ENCODE measurements at regions of chr15 and their contacts with region 1.

Region 1: DNA sequence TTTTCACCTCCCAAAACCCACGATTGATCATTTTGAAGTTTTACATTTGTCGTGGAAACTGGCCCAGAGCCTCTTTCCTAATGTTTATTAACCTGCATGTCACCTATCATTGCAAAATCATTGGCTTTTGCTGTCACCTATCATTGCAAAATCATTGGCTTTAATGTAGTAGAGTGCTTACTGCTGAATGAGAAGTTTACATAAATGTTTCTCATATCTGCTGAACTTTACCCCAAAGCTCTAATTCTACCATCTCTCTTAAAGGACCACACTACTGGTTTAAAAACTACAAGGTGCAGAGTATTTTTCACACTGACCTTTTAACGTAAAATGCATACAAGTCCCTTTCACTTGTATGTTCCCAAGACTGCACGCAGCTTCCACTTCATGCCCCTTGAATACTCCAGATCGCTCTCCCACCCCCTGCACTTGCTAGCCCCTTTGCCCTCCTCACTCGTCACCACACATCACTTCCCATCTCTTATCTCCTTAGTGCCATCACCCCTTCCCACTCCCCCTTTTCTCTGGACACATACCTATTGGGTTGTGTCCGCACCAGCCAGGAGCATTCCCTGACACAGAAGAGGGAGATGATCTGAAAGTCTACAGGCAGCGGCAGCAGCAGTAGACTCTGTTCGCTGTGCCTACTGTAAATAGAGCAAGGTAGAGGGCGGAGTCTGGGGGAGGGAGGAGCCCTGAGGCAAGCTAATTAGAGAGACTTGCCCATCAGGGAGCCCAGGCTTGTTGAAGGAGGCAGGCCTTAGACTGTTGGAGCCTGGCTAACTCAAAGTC is 30.2 kb upstream of the ATOSA start:
- ATAC-seq: peak in 7 of 8 experiments; percentile 34 to 77 (median 62)
- H3K4me3 ChIP-seq: no peak overlapping the region
- H3K27ac ChIP-seq: no peak overlapping the region
- H3K4me1 ChIP-seq: no peaks in the 10 kb centered on the region

Region 2: GRCh38 chr15:52615284-52615683 is 94.1 kb before region 1 on chr15:
- in situ Hi-C with region 1: loop called in 1 of 9 experiments (anchors 25 kb)
- ATAC-seq: no peak
- H3K4me3 ChIP-seq: no peak overlapping the region
- H3K27ac ChIP-seq: no peak overlapping the region
- H3K4me1 ChIP-seq: no peaks in the 10 kb centered on the region

Measured in motor neuron (in vitro differentiated cells).